ENCODE measurements at regions of chr2 and their contacts with region 1.

Region 1: DNA sequence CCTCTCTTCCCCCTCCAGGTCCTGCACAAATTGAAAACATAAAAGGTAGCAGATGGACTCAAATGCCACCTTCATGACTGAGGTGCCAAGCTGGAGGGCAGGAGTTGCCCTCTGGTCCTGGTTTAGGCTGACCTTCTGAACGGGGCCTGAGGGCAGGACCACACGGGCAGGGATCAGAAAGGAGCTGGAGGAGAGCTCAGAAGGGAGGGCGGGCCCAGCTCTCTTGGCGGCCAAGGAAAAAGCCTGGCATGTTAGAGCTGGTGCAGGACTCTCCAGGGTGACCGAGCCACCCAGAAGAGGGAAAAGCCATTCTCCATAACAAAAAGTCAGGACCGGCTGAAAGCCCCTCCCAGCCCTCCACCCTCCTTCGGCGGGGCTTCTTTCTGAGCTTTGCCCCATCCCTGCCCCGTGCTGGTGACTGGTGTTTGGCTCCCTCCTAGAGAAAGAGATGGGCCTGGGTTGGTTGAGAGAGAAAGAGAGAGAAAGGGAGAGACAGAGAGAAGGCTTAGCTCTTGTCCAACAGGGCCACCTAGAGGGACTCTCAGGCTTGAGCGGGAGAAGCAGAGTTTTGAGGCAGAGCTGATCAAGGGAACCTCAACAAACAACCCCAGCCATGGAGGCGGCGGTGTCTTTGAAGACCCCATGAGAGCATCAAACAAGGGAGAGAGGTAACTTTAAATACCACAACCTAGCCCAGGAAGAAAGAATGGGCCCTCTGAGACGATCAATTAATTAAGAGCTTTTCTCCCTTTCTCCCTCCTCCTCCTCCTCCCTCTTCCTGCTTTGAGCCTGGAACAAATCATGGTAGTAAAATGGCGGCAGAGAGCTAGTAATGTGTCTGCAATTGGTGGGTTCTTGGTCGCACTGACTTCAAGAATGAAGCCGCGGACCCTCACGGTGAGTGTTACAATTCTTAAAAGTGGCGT is 50.8 kb downstream of the WIPF1 start:
- DNase-seq: peak; percentile 70
- ATAC-seq: peak; percentile 89
- H3K4me3 Mint-ChIP-seq: no peak overlapping the region
- H3K27ac Mint-ChIP-seq: no peak overlapping the region
- H3K4me1 Mint-ChIP-seq: peaks cover 9% of the 10 kb centered on the region
- H3K27me3 Mint-ChIP-seq: no peaks in the 10 kb centered on the region

Region 2: DNA sequence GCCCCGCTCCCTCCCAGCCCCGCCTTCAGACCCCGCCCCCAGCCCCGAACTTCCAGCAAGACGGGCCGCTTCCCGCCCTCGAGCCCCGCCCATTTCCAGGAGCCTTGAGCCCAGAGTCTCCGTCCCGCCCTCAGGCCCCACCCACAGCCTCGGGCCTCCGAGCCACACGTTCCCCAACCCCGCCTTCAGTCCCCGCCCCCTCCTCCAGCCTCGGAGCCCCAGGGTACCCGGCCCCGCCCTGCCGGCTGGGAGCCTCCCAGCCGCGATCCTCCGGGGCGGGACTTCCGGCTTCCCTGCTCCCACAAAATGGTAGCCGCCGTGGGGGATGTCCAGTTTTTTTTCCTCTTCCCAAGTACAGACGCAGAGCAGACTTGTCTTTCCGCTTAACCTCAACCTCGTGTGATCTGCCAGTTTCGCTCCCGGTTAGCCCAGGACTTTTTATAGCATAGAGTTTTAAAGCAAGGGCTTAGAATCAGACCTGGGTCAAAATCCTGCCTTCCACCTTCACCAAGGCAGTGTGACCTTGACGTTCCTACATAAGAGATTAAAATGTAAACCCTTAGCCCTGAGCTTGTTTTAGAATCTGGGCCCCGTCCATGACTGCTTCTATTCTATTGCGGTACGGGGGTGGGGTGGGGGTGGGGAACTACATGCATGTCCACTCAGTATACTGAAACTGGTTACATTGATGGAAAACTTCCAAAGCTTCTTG is 59.6 kb before region 1 on chr2:
- CTCF ChIA-PET with region 1: interaction called, 19 read pairs
- DNase-seq: peak; percentile 100
- ATAC-seq: peak; percentile 92
- H3K4me3 Mint-ChIP-seq: peak overlapping the region; percentile 95
- H3K27ac Mint-ChIP-seq: peak overlapping the region; percentile 79
- H3K4me1 Mint-ChIP-seq: peaks cover 59% of the 10 kb centered on the region
- H3K27me3 Mint-ChIP-seq: no peaks in the 10 kb centered on the region

Region 3: GRCh38 chr2:174492963-174493431 is 53.8 kb before region 1 on chr2:
- CTCF ChIA-PET with region 1: interaction called, 19 read pairs
- DNase-seq: peak; percentile 87
- ATAC-seq: peak; percentile 85
- H3K4me3 Mint-ChIP-seq: peak overlapping the region; percentile 74
- H3K27ac Mint-ChIP-seq: peak overlapping the region; percentile 99
- H3K4me1 Mint-ChIP-seq: peaks cover 65% of the 10 kb centered on the region
- H3K27me3 Mint-ChIP-seq: no peaks in the 10 kb centered on the region

Region 4: DNA sequence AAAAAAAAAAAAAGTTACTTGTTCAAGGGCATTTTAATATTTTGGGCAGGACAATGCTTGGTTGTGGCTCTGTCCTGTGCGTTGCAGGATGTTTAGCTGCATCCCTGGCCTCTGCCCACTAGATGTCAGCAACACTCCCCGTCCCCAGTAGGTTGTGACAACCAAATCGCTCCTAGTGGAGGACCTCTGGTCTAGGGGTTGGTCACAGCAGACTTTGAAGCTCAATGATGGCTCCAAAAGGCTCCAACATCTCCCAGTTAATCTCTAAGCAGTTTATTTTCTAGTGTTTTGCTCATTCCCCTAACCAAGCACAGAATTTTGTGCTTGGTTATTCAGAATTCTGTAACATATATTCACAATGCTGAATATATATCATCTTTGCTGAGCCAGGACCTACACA is 150.4 kb after region 1 on chr2:
- CTCF ChIA-PET with region 1: no interaction called
- DNase-seq: peak; percentile 82
- ATAC-seq: peak; percentile 98
- H3K4me3 Mint-ChIP-seq: no peak overlapping the region
- H3K27ac Mint-ChIP-seq: no peak overlapping the region
- H3K4me1 Mint-ChIP-seq: no peaks in the 10 kb centered on the region
- H3K27me3 Mint-ChIP-seq: peaks cover 26% of the 10 kb centered on the region